Activated CD8-positive, alpha-beta T cell treated with anti-CD3 and anti-CD28 coated beads for 36 hours (primary cell): ENCODE measurements at regions of chr6 and their contacts with region 1.

Region 1: GRCh38 chr6:28953039-28953584 is 29.3 kb upstream of the TRIM27 start:
- DNase-seq: peak; percentile 80
- ATAC-seq: peak; percentile 88
- H3K4me3 Mint-ChIP-seq: peak overlapping the region; percentile 78
- H3K27ac Mint-ChIP-seq: peak overlapping the region; percentile 31
- H3K4me1 Mint-ChIP-seq: peaks cover 7% of the 10 kb centered on the region
- H3K27me3 Mint-ChIP-seq: peaks cover 8% of the 10 kb centered on the region
- CTCF ChIP-seq: no peak

Region 2: GRCh38 chr6:28523241-28523622 is 429.9 kb before region 1 on chr6:
- CTCF ChIA-PET with region 1: no interaction called
- POLR2A ChIA-PET with region 1: no interaction called
- intact Hi-C with region 1: no loop called
- DNase-seq: peak; percentile 67
- ATAC-seq: peak; percentile 95
- H3K4me3 Mint-ChIP-seq: no peak overlapping the region
- H3K27ac Mint-ChIP-seq: no peak overlapping the region
- H3K4me1 Mint-ChIP-seq: peaks cover 15% of the 10 kb centered on the region
- H3K27me3 Mint-ChIP-seq: peaks cover 35% of the 10 kb centered on the region
- CTCF ChIP-seq: no peak

Region 3: DNA sequence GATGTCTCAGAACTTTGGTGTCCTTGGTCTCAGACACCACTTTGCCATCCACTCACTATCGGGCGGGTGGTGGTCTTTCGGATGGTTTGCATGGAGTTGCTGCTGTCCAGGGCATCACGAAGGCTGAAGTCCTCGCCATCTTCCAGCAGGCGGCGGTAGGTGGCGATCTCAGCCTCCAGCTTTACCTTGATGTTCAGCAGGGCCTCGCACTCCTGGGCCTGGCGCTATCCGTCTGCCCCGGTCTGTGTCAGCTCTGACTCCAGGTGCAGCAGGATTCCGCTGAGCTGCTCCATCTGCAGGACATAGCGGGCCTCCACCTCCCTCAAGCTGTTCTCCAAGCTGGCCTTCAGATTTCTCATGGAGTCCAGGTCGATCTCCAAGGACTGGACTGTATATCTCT is 16.0 kb after region 1 on chr6:
- CTCF ChIA-PET with region 1: no interaction called
- POLR2A ChIA-PET with region 1: no interaction called
- intact Hi-C with region 1: no loop called
- DNase-seq: no peak
- ATAC-seq: no peak
- H3K4me3 Mint-ChIP-seq: no peak overlapping the region
- H3K27ac Mint-ChIP-seq: no peak overlapping the region
- H3K4me1 Mint-ChIP-seq: no peaks in the 10 kb centered on the region
- H3K27me3 Mint-ChIP-seq: peaks cover 9% of the 10 kb centered on the region
- CTCF ChIP-seq: no peak

Region 4: DNA sequence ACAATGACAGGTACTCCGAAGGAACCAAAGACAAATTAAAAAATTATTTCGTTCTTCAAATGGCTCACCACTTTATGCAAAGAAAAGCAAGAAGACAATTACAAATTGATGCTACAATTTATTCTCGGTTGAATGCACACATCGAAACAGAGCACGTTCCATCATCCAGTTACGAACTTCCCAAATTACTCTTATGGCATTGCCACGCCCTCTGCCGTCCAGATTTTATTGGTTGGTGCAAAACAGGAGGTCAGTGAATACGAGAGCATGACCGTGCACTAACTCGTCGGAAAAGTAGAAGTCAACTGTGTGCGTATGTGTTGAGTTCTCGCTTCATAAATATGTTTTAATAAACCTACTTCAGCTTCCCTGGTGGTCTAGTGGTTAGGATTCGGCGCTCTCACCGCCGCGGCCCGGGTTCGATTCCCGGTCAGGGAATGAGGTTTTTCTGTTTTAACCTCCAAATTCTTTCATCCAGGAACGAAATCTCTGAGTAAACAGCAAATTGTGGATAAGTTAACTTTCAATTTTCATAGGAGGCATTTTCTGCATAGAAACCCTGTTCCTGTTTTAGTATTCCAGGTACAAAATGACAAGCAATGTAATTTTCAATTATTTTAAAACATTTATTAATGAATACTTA is 28.8 kb after region 1 on chr6:
- CTCF ChIA-PET with region 1: no interaction called
- POLR2A ChIA-PET with region 1: interaction called, 3 read pairs
- intact Hi-C with region 1: loop called (anchors 2 kb)
- DNase-seq: peak; percentile 77
- ATAC-seq: peak; percentile 48
- H3K4me3 Mint-ChIP-seq: peak overlapping the region; percentile 84
- H3K27ac Mint-ChIP-seq: peak overlapping the region; percentile 91
- H3K4me1 Mint-ChIP-seq: peaks cover 53% of the 10 kb centered on the region
- H3K27me3 Mint-ChIP-seq: peaks cover 38% of the 10 kb centered on the region
- CTCF ChIP-seq: no peak